HepG2 (cell line): ENCODE measurements at regions of chr1 and their contacts with region 1.

Region 1: GRCh38 chr1:3423245-3423829 is 31.1 kb upstream of the ARHGEF16 start:
- DNase-seq: peak; percentile 80
- ATAC-seq: peak; percentile 90
- H3K4me3 ChIP-seq: peak overlapping the region in 1 of 3 experiments; percentile 36; a peak in 1 of 6 replicates
- H3K27ac ChIP-seq: peak overlapping the region; percentile 70
- H3K4me1 ChIP-seq: peaks cover 46% of the 10 kb centered on the region
- H3K27me3 ChIP-seq: peaks cover 2 to 9% of the 10 kb centered on the region in 2 experiments; a peak in 3 of 5 replicates
- CTCF ChIP-seq: peak; percentile 51
- EP300 ChIP-seq: peak in 1 of 2 experiments; percentile 52; a peak in 1 of 4 replicates
- POLR2A ChIP-seq: no peak
- RAD21 ChIP-seq: no peak

Region 2: DNA sequence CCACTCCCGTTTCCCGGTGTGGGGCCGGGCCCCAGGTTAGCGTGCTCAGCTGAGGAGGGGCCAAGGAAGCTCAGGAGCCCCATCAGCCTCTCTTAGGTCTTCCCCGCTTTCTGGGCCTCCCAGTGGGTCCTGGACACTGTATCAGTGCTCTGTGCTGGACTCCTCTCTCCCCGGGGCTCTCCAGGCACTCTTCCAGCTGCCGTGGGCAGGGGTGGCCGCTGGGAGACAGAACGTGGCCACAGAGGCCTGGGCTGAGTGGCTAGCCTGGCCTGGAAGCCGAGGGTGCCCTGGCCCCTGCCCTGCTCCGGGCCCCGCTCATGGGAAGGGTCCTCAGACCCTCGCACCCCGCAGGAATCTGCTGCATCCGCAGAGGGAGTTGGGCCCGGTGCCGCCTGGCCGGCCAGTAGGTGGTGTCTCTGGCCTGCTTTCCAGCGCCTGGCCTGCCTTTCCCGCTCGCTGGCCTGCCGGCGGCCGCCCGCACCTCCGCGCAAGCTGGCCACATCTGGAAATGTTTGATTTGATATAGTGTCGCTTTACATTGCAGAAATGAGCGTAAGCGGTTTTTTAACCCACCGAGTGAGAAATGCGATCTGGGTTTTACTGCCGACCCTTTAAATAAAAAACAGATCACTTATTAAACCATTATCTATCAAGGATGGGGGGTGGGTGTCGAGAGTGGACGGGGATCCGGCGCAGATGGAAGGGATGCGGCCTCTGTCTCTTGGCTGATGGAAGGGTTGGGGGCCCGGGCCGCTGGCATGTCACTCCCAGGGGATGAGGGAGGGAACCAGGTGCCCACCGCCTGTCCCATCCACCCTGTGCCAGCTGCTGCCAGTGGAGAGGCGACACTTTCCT is 547.4 kb before region 1 on chr1:
- CTCF ChIA-PET with region 1: interaction called, 3 read pairs
- POLR2A ChIA-PET with region 1: no interaction called
- in situ Hi-C with region 1: no loop called
- intact Hi-C with region 1: loop called (anchors 10 kb)
- DNase-seq: no peak
- ATAC-seq: peak; percentile 78
- H3K4me3 ChIP-seq: no peak overlapping the region
- H3K27ac ChIP-seq: no peak overlapping the region
- H3K4me1 ChIP-seq: no peaks in the 10 kb centered on the region
- H3K27me3 ChIP-seq: peaks cover 38 to 71% of the 10 kb centered on the region in 2 experiments
- CTCF ChIP-seq: peak; percentile 80
- EP300 ChIP-seq: no peak
- POLR2A ChIP-seq: no peak
- RAD21 ChIP-seq: peak; percentile 63

Region 3: DNA sequence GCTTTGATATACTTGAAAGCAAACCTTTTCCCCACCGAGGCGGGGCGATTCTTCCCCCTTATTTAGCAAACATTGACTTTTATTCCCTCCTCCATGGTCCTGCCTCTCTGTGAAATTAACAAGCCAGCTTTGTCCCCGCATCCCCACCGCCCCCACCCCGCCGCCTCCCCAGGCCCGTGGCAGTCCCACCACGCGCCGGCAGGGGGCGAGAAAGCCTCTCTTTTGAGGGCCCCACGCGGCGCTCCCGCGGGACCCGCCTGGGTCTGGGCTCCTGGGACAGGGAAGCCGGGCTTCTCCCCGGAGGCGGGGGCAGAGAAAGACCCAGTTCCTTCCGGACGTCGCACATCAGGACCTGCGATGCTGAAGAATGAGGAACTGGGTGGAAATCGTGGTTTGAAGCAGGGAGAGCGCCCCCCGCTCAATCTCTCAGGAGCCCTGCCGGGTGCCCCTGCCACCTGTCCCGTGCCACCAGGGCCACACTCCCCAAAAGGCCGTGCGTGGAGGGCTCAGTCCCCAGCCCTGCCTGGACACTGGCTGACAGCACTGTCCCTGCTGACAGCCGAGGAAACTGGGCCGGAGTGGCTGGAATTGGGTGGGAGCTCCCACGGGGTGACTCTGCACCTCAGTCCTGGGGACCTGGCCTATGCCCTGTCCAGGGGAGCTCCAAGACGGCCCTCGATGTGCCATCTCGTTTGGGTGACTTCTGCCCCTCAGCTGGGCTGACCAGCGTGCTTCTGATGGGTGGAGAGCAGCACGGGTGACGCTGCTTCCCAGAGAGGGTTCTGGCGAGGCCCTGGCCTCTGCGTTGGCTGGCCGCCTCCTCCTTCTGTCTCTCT is 410.7 kb before region 1 on chr1:
- CTCF ChIA-PET with region 1: interaction called, 14 read pairs
- POLR2A ChIA-PET with region 1: no interaction called
- in situ Hi-C with region 1: no loop called
- intact Hi-C with region 1: loop called (anchors 1 kb)
- DNase-seq: peak; percentile 12
- ATAC-seq: peak; percentile 67
- H3K4me3 ChIP-seq: no peak overlapping the region
- H3K27ac ChIP-seq: no peak overlapping the region
- H3K4me1 ChIP-seq: no peaks in the 10 kb centered on the region
- H3K27me3 ChIP-seq: peaks cover 5 to 31% of the 10 kb centered on the region in 2 experiments
- CTCF ChIP-seq: peak; percentile 74
- EP300 ChIP-seq: no peak
- POLR2A ChIP-seq: no peak
- RAD21 ChIP-seq: peak; percentile 73

Region 4: DNA sequence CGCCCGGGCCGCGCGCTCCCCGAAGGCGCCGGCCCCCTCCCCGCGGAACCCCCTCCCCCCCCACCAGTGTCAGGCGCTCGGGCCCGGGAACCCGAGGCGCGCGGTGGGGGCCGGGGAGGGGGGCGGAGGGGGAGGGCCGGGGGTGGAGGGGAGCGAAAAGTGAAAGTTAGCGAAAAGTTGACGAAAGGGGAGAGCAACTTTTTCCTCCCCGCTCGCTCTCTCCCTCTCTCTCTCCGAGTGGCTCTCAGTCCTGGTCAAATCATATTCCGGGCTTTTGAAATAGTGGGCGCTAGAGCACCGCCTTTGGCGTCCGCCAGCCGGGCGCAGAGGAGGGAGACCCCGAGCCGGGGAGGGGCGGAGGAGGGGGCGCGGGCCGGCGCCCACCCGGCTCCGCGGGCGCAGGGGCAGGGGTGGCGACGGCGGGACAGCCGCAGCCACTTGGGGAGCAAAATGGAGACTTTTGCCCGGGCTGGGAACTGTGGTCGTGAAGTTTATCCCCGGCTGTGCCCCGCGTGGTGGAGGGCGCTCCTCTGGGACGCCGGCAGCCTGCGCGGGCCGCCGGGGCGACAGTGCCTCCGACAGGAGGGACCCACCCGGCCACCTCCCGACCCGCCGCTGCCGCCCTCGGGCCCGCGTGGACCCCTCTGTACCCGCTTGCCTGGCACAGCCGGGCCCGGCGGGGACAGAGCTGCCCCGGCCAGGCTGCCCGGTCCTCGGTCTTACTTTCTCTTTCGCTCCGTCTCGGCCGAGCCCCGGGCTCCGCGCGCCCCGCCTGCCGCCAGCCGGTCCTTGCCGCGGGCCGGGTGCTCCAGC is 353.6 kb before region 1 on chr1:
- CTCF ChIA-PET with region 1: interaction called, 3 read pairs
- POLR2A ChIA-PET with region 1: no interaction called
- in situ Hi-C with region 1: loop called (anchors 5 kb)
- intact Hi-C with region 1: no loop called
- DNase-seq: peak; percentile 64
- ATAC-seq: peak; percentile 47
- H3K4me3 ChIP-seq: peak overlapping the region; percentile 60 to 77 (median 74)
- H3K27ac ChIP-seq: peak overlapping the region; percentile 56
- H3K4me1 ChIP-seq: peaks cover 35% of the 10 kb centered on the region
- H3K27me3 ChIP-seq: peaks cover 2 to 23% of the 10 kb centered on the region in 2 experiments
- CTCF ChIP-seq: peak; percentile 77
- EP300 ChIP-seq: no peak
- POLR2A ChIP-seq: no peak
- RAD21 ChIP-seq: peak; percentile 55

Region 5: DNA sequence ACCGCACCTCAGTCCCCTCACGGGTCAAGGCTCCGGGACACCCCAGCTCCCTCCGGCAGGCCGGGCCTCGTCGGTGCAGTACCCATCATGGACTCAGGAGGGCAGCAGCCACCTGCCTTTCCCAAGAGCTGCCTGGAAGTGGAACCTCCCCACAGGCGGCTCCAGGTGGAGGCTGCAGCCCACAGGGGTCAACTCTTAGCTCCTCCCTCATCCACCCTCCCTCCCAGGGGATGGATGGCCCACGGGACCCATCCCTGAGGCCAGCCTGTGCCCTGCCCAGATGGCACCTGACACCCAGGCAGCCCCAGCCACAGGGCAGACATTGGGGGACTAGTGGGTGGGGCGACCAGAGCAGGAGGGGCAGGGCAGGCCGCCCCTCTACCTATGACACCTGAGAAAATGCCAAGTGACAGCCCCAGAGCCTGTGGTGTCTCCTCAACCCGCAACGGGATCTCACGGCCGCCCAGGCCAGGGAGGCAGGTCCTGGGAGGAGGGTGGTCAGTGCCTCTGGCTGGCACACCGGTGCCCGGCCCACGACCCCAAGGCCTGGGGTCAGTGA is 29.9 kb after region 1 on chr1:
- CTCF ChIA-PET with region 1: no interaction called
- POLR2A ChIA-PET with region 1: no interaction called
- in situ Hi-C with region 1: no loop called
- intact Hi-C with region 1: no loop called
- DNase-seq: peak; percentile 69
- ATAC-seq: peak; percentile 22
- H3K4me3 ChIP-seq: peak overlapping the region in 1 of 3 experiments; percentile 79; a peak in 1 of 6 replicates
- H3K27ac ChIP-seq: peak overlapping the region; percentile 98
- H3K4me1 ChIP-seq: peaks cover 74% of the 10 kb centered on the region
- H3K27me3 ChIP-seq: no peaks in the 10 kb centered on the region
- CTCF ChIP-seq: peak; percentile 98
- EP300 ChIP-seq: no peak
- POLR2A ChIP-seq: no peak
- RAD21 ChIP-seq: peak; percentile 99